ENCODE measurements at regions of chr9 and their contacts with region 1.

Region 1: GRCh38 chr9:135410831-135411473 is 68.6 kb upstream of the PPP1R26 start:
- DNase-seq: no peak
- H3K4me3 ChIP-seq: no peak overlapping the region
- H3K27ac ChIP-seq: no peak overlapping the region
- H3K4me1 ChIP-seq: no peaks in the 10 kb centered on the region
- H3K27me3 ChIP-seq: no peaks in the 10 kb centered on the region
- CTCF ChIP-seq: no peak

Region 2: GRCh38 chr9:134171316-134172197 is 1239.4 kb before region 1 on chr9:
- CTCF ChIA-PET with region 1: no interaction called
- dilution Hi-C with region 1: no loop called
- in situ Hi-C with region 1: no loop called
- intact Hi-C with region 1: loop called (anchors 5 kb)
- DNase-seq: peak; percentile 32
- H3K4me3 ChIP-seq: no peak overlapping the region
- H3K27ac ChIP-seq: no peak overlapping the region
- H3K4me1 ChIP-seq: peaks cover 10% of the 10 kb centered on the region
- H3K27me3 ChIP-seq: no peaks in the 10 kb centered on the region
- CTCF ChIP-seq: no peak

Region 3: GRCh38 chr9:134698587-134699342 is 712.2 kb before region 1 on chr9:
- CTCF ChIA-PET with region 1: no interaction called
- dilution Hi-C with region 1: no loop called
- in situ Hi-C with region 1: no loop called
- intact Hi-C with region 1: loop called (anchors 2 kb)
- DNase-seq: peak; percentile 4
- H3K4me3 ChIP-seq: no peak overlapping the region
- H3K27ac ChIP-seq: no peak overlapping the region
- H3K4me1 ChIP-seq: no peaks in the 10 kb centered on the region
- H3K27me3 ChIP-seq: no peaks in the 10 kb centered on the region
- CTCF ChIP-seq: peak; percentile 32 to 53

Region 4: GRCh38 chr9:134778841-134779411 is 632.0 kb before region 1 on chr9:
- CTCF ChIA-PET with region 1: no interaction called
- dilution Hi-C with region 1: no loop called
- in situ Hi-C with region 1: no loop called
- intact Hi-C with region 1: loop called (anchors 5 kb)
- DNase-seq: peak; percentile 29
- H3K4me3 ChIP-seq: no peak overlapping the region
- H3K27ac ChIP-seq: no peak overlapping the region
- H3K4me1 ChIP-seq: no peaks in the 10 kb centered on the region
- H3K27me3 ChIP-seq: no peaks in the 10 kb centered on the region
- CTCF ChIP-seq: peak; percentile 14 to 49

Region 5: GRCh38 chr9:135085830-135086546 is 325.0 kb before region 1 on chr9:
- CTCF ChIA-PET with region 1: no interaction called
- dilution Hi-C with region 1: no loop called
- in situ Hi-C with region 1: loop called in 1 of 2 experiments (anchors 10 kb)
- intact Hi-C with region 1: loop called (anchors 1 kb)
- DNase-seq: peak; percentile 33
- H3K4me3 ChIP-seq: no peak overlapping the region
- H3K27ac ChIP-seq: no peak overlapping the region
- H3K4me1 ChIP-seq: no peaks in the 10 kb centered on the region
- H3K27me3 ChIP-seq: peaks cover 17% of the 10 kb centered on the region
- CTCF ChIP-seq: peak; percentile 53 to 73

Region 6: GRCh38 chr9:135329571-135330306 is 81.2 kb before region 1 on chr9:
- CTCF ChIA-PET with region 1: no interaction called
- dilution Hi-C with region 1: loop called (anchors 5 kb)
- in situ Hi-C with region 1: no loop called
- intact Hi-C with region 1: no loop called
- DNase-seq: no peak
- H3K4me3 ChIP-seq: no peak overlapping the region
- H3K27ac ChIP-seq: no peak overlapping the region
- H3K4me1 ChIP-seq: no peaks in the 10 kb centered on the region
- H3K27me3 ChIP-seq: no peaks in the 10 kb centered on the region
- CTCF ChIP-seq: no peak

Measured in mammary epithelial cell (primary cell).